ENCODE measurements at regions of chr10 and their contacts with region 1.

Region 1: GRCh38 chr10:77756319-77757232 is 119.0 kb upstream of the KCNMA1 start:
- DNase-seq: no peak
- ATAC-seq: no peak
- H3K4me3 ChIP-seq: no peak overlapping the region
- H3K4me3 Mint-ChIP-seq: no peak overlapping the region
- H3K27ac ChIP-seq: no peak overlapping the region
- H3K27ac Mint-ChIP-seq: no peak overlapping the region
- H3K4me1 ChIP-seq: no peaks in the 10 kb centered on the region
- H3K4me1 Mint-ChIP-seq: no peaks in the 10 kb centered on the region
- H3K27me3 ChIP-seq: no peaks in the 10 kb centered on the region
- H3K27me3 Mint-ChIP-seq: peaks cover 18% of the 10 kb centered on the region
- CTCF ChIP-seq: no peak

Region 2: GRCh38 chr10:77692782-77693181 is 63.8 kb before region 1 on chr10:
- CTCF ChIA-PET with region 1: no interaction called
- POLR2A ChIA-PET with region 1: no interaction called
- intact Hi-C with region 1: loop called (anchors 10 kb)
- DNase-seq: no peak
- ATAC-seq: no peak
- H3K4me3 ChIP-seq: no peak overlapping the region
- H3K4me3 Mint-ChIP-seq: no peak overlapping the region
- H3K27ac ChIP-seq: no peak overlapping the region
- H3K27ac Mint-ChIP-seq: no peak overlapping the region
- H3K4me1 ChIP-seq: peaks cover 0 to under 1% of the 10 kb centered on the region in 2 donors
- H3K4me1 Mint-ChIP-seq: peaks cover 4% of the 10 kb centered on the region
- H3K27me3 ChIP-seq: peaks cover 0 to 2% (median 0%) of the 10 kb centered on the region in 4 experiments
- H3K27me3 Mint-ChIP-seq: peaks cover 7% of the 10 kb centered on the region
- CTCF ChIP-seq: no peak